Activated CD4-positive, alpha-beta memory T cell treated with anti-CD3 and anti-CD28 coated beads, Interleukin-2, amount 10 ng/mL, durations not matched to agents 7 days and 5 days (primary cell): ENCODE measurements at regions of chr11 and their contacts with region 1.

Region 1: DNA sequence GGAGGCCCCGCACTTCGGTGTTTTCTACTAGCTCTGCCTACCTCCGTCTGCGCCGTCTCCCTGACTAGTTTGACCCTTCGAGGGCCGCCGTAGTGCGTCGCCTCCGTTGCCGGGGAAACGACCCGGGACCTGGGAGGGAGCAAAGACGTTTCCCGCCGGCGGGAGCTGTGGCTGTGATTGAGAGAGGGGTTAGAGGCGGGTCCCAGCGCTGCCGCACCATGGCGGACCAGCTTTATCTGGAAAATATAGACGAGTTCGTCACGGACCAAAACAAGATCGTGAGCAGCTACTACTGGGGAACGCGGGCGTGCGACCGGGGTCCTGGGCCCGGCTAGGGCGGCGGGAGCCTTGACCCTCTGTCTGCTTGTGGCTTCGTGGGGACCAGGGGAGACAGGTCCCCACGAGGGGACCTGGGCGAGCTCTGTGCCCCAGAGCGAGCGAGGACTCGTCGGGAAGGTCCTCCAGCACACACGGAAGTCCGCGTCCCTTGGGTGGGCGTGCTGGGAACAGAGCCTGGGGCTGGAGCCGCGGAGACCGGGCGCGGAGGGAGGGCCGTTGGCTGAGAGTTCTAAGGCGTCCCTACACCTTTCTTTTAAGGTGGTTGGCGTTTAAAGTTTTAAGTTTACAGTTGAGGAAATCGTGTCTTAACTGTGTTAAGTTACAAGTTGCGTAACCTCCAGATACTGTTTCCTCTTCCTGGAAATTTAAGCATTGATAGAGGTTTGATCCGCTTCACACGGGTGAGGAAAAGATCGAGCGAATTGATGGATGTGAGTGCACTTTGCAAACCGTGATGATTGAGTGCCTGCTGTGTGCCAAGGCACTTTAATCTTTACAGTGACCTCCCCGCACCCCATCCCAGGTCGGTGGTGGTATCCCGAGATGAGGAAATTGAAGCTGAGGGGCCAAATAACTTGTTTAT is at the start of gene POLD3:
- DNase-seq: peak; percentile 95
- H3K4me3 Mint-ChIP-seq: peak within 1 kb of the TSS; percentile 91
- H3K27ac Mint-ChIP-seq: peak within 1 kb of the TSS; percentile 76
- H3K4me1 Mint-ChIP-seq: peaks cover 39% of the 10 kb centered on the region
- H3K27me3 Mint-ChIP-seq: peaks cover 5% of the 10 kb centered on the region
- total RNA-seq, gene POLD3: 46.5 to 47.5 TPM

Region 2: GRCh38 chr11:74602637-74603556 is 10.2 kb after region 1 on chr11:
- CTCF ChIA-PET with region 1: interaction called, 4 read pairs
- POLR2A ChIA-PET with region 1: interaction called, 18 read pairs
- DNase-seq: no peak
- H3K4me3 Mint-ChIP-seq: no peak overlapping the region
- H3K27ac Mint-ChIP-seq: no peak overlapping the region
- H3K4me1 Mint-ChIP-seq: no peaks in the 10 kb centered on the region
- H3K27me3 Mint-ChIP-seq: no peaks in the 10 kb centered on the region